GM12878 (cell line): ENCODE measurements at regions of chr12 and their contacts with region 1.

Region 1: GRCh38 chr12:6335451-6336078 is 6.3 kb downstream of the TNFRSF1A start:
- DNase-seq: peak; percentile 60
- ATAC-seq: peak; percentile 85
- H3K4me3 ChIP-seq: peak overlapping the region; percentile 53
- H3K27ac ChIP-seq: peak overlapping the region; percentile 93
- H3K4me1 ChIP-seq: peaks cover 45% of the 10 kb centered on the region
- H3K27me3 ChIP-seq: no peaks in the 10 kb centered on the region
- CTCF ChIP-seq: peak; percentile 71 to 92 (median 76)
- EP300 ChIP-seq: no peak; a peak in 1 of 4 replicates
- POLR2A ChIP-seq: peak; percentile 83
- RAD21 ChIP-seq: peak; percentile 75

Region 2: DNA sequence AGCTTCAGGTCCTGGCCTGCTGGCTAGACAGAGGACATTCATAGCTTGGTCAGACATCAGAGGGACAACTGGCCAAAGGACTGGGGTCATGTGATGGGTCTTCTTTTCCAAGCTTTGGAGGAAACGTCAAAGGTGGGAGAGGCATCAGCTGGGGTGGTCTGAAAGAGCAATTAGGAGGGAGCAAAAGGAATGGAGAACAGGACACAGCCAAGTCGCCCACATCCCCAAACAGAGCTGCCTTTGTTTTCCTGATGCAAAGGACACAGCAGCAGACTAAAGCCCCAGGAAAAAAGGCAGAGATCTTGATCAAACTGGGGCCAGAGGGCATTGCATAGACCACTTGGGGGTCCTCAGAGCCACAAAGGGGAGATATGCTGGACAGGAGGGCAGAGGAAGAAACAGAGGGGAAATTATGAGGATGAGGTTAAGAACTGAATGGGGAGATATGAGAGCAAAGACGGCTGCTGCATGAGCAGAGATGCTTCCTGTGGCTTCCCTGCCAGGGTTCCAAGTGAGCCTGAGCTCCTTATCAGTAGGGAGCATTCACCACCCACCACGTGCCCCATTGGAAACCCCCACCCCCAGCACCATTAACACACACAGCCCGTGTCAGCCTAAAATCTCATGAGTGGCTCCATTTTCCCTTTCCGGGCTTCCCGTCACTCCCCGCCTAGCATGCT is 452.9 kb before region 1 on chr12:
- CTCF ChIA-PET with region 1: no interaction called
- POLR2A ChIA-PET with region 1: no interaction called
- RAD21 ChIA-PET with region 1: no interaction called
- SMC1A ChIA-PET with region 1: no interaction called
- in situ Hi-C with region 1: no loop called
- intact Hi-C with region 1: no loop called
- DNase-seq: no peak
- ATAC-seq: no peak
- H3K4me3 ChIP-seq: no peak overlapping the region
- H3K27ac ChIP-seq: no peak overlapping the region
- H3K4me1 ChIP-seq: no peaks in the 10 kb centered on the region
- H3K27me3 ChIP-seq: peaks cover 0 to 2% of the 10 kb centered on the region in 2 experiments; a peak in 1 of 4 replicates
- CTCF ChIP-seq: no peak
- EP300 ChIP-seq: no peak
- POLR2A ChIP-seq: no peak
- RAD21 ChIP-seq: no peak

Region 3: DNA sequence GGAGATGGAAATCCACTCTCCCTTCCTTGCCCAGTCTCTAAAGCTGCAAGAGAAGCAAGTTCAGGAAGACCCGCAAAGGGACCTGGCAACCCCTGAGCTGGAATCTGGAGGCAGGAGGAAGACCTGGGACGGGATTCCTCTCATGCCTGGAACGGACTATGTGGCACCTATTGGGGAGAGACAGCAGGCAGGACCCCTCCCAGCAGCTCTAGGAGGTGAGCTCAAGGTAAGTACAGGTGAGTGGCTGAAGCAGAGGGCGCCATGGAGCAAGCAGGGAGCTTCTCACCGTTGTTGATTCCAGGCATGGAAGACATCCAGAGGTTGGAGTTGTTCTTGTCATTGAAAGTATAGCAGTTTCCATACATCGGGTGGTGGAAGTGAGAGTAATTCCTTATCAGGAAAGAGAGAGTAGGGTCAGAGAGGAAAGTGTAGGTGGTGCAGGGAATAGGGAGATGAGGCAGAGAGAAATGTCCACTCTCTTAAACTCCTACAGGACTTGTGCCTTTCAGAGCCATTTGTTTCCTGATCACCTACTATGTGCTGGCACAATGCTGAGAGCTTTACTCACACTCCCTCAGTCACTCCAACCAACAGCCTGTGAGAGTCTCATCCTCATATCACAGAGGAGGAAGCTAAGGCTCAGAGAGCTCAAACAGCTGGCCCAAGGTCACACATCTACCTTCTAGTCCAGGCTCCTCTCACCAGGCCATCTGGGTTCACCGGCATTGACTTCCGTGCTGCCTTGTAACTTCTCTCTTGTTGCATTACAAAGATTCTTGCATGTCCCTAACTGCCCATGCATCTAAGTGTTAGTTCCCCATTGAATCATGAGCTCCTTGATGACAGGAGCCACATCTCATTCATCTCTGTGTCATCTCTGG is 20.2 kb after region 1 on chr12:
- CTCF ChIA-PET with region 1: interaction called, 11 read pairs
- POLR2A ChIA-PET with region 1: interaction called, 4 read pairs
- RAD21 ChIA-PET with region 1: interaction called, 9 read pairs
- SMC1A ChIA-PET with region 1: interaction called, 3 read pairs
- in situ Hi-C with region 1: no loop called
- intact Hi-C with region 1: no loop called
- DNase-seq: no peak
- ATAC-seq: peak; percentile 39
- H3K4me3 ChIP-seq: no peak overlapping the region
- H3K27ac ChIP-seq: no peak overlapping the region
- H3K4me1 ChIP-seq: no peaks in the 10 kb centered on the region
- H3K27me3 ChIP-seq: no peaks in the 10 kb centered on the region; a peak in 1 of 4 replicates
- CTCF ChIP-seq: no peak
- EP300 ChIP-seq: no peak
- POLR2A ChIP-seq: no peak
- RAD21 ChIP-seq: no peak

Region 4: DNA sequence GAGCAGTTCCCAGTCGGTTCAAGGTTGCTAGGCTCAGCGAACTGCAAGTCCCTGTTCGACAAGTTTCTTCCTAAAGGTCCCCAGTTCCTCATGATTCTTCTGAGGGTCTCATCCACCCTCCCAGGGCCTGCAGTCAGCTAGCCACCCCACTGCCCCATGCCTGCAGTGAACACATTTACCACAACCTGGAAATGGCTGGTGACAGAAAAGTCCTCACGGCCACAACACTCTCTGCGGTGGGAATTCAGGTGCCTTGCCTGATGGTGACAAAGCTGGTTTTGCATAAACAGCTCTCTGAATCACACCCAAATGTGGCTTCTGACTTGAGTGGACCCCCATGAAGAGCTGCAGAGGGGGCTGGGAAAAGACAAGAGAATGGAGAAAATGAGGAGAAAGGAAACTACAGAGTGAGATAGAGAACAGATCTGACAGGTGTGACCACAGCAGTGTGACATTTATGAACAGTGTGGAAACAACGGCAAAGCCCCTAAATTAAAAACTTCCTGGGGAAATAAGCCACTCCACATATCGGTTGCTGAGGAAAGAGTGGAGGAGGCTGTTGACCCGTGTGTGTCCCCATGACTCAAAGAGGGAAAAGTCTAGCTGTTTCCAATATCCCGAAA is 107.9 kb after region 1 on chr12:
- CTCF ChIA-PET with region 1: interaction called, 7 read pairs
- POLR2A ChIA-PET with region 1: interaction called, 17 read pairs
- RAD21 ChIA-PET with region 1: interaction called, 6 read pairs
- SMC1A ChIA-PET with region 1: interaction called, 5 read pairs
- in situ Hi-C with region 1: no loop called
- intact Hi-C with region 1: no loop called
- DNase-seq: no peak
- ATAC-seq: peak; percentile 47
- H3K4me3 ChIP-seq: peak overlapping the region; percentile 66
- H3K27ac ChIP-seq: peak overlapping the region; percentile 99
- H3K4me1 ChIP-seq: peaks cover 46% of the 10 kb centered on the region
- H3K27me3 ChIP-seq: no peaks in the 10 kb centered on the region
- CTCF ChIP-seq: no peak
- EP300 ChIP-seq: peak in 1 of 2 experiments; percentile 75; a peak in 2 of 4 replicates
- POLR2A ChIP-seq: peak; percentile 68
- RAD21 ChIP-seq: no peak

Region 5: DNA sequence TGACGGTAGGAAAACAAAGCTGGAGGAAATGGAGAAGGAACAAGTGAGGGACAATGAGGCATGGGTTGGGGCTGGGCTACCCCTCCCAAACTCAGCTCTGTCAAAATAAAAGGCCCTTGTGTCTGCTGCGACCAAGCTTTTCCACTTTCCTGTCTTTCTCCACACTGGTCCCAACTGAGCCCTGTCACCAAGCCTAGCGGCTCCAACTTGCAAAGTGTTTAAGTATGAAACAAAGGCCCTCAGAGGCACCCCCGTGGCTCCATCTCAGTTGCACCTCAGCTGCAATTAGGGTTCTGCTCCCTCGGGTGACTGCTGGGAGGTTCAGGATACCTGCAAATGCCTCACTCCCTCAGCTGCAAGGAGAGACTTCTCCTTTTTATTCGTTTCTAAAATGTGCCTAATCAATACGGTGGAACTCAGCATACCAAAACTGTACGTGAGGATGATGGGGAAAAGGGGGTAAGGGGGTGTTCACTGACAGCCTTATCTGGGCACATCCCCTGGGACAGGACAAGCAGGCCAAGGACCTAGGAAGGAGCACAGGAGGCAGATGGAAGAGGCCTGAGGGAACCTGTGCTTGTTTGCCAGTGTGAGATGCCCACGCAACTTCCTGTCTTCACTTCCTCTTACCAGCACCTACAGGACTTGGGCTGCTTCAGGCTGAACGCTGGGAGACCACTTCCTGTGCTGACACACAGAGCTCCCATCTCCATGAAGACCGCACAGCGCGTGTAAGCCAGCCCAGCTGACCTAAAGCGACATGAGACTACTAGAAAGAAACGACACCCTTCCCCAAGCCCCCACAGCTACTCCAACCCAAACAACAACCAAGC is 126.1 kb after region 1 on chr12:
- CTCF ChIA-PET with region 1: interaction called, 43 read pairs
- POLR2A ChIA-PET with region 1: interaction called, 11 read pairs
- RAD21 ChIA-PET with region 1: interaction called, 44 read pairs
- SMC1A ChIA-PET with region 1: interaction called, 39 read pairs
- in situ Hi-C with region 1: loop called (anchors 5 kb)
- intact Hi-C with region 1: loop called (anchors 2 kb)
- DNase-seq: peak; percentile 95
- ATAC-seq: peak; percentile 92
- H3K4me3 ChIP-seq: peak overlapping the region; percentile 33; the same call in 1 of the 2 replicates
- H3K27ac ChIP-seq: peak overlapping the region; percentile 89
- H3K4me1 ChIP-seq: peaks cover 51% of the 10 kb centered on the region
- H3K27me3 ChIP-seq: no peaks in the 10 kb centered on the region
- CTCF ChIP-seq: no peak
- EP300 ChIP-seq: peak; percentile 63 to 88; a peak in 3 of 4 replicates
- POLR2A ChIP-seq: peak; percentile 72
- RAD21 ChIP-seq: no peak

Region 6: GRCh38 chr12:6507102-6507998 is 171.8 kb after region 1 on chr12:
- CTCF ChIA-PET with region 1: no interaction called
- POLR2A ChIA-PET with region 1: no interaction called
- RAD21 ChIA-PET with region 1: no interaction called
- SMC1A ChIA-PET with region 1: no interaction called
- in situ Hi-C with region 1: no loop called
- intact Hi-C with region 1: no loop called
- DNase-seq: no peak
- ATAC-seq: no peak
- H3K4me3 ChIP-seq: no peak overlapping the region
- H3K27ac ChIP-seq: no peak overlapping the region
- H3K4me1 ChIP-seq: no peaks in the 10 kb centered on the region
- H3K27me3 ChIP-seq: no peaks in the 10 kb centered on the region
- CTCF ChIP-seq: no peak
- EP300 ChIP-seq: no peak
- POLR2A ChIP-seq: no peak
- RAD21 ChIP-seq: no peak